Posterior cingulate gyrus (tissue), 11 donors: ENCODE measurements at regions of chr7 and their contacts with region 1.

Region 1: GRCh38 chr7:100489824-100490223 is 6.1 kb downstream of the NYAP1 start:
- DNase-seq: peak; percentile 85 to 99 (median 95)

Region 2: GRCh38 chr7:100538654-100539435 is 49.0 kb after region 1 on chr7 and contains the start of gene AGFG2:
- intact Hi-C with region 1: loop called (anchors 5 kb)
- DNase-seq: peak; percentile 100

Region 3: GRCh38 chr7:100556541-100556940 is 66.7 kb after region 1 on chr7:
- intact Hi-C with region 1: loop called (anchors 5 kb)
- DNase-seq: no peak

Region 4: DNA sequence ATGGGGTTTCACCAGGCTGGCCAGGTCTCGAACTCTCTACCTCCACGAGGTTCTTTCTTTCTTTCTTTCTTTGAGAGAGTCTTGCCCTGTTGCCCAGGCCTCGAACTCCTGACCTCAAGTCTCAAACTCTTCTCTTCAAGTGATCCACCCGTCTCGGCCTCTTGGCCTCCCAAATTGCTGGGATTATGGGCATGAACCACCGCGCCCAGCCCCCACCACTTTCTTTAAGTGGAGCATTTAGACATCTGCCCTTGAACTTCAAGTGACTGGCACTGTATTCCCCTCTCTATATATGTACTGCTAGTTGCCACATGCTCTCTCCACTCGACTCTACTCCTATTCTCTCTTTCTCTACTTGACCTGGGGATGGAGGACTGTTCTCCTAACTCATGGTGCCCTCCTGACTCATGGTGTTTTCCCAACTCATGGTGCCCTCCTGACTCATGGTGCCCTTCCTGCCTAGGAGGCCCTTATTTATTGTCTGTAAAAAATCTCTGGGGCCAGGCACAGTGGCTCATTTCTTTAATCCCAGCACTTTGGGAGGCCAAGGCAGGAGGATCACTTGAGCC is 425.1 kb after region 1 on chr7:
- intact Hi-C with region 1: no loop called
- DNase-seq: peak in 1 of 10 donors; percentile 24